HepG2 (cell line): ENCODE measurements at regions of chr4 and their contacts with region 1.

Region 1: GRCh38 chr4:78592104-78592783 is 40.7 kb downstream of the ANXA3 start:
- DNase-seq: no peak
- ATAC-seq: peak; percentile 62; the same call in 2 of the 3 replicates
- H3K4me3 ChIP-seq: no peak overlapping the region
- H3K27ac ChIP-seq: no peak overlapping the region
- H3K4me1 ChIP-seq: no peaks in the 10 kb centered on the region
- H3K27me3 ChIP-seq: no peaks in the 10 kb centered on the region
- CTCF ChIP-seq: peak; percentile 41
- EP300 ChIP-seq: no peak
- POLR2A ChIP-seq: no peak
- RAD21 ChIP-seq: no peak

Region 2: GRCh38 chr4:78542373-78542772 is 49.9 kb before region 1 on chr4:
- CTCF ChIA-PET with region 1: no interaction called
- POLR2A ChIA-PET with region 1: no interaction called
- in situ Hi-C with region 1: no loop called
- intact Hi-C with region 1: loop called (anchors 2 kb)
- DNase-seq: peak; percentile 30
- ATAC-seq: no peak
- H3K4me3 ChIP-seq: no peak overlapping the region
- H3K27ac ChIP-seq: no peak overlapping the region
- H3K4me1 ChIP-seq: no peaks in the 10 kb centered on the region
- H3K27me3 ChIP-seq: no peaks in the 10 kb centered on the region
- CTCF ChIP-seq: no peak
- EP300 ChIP-seq: no peak
- POLR2A ChIP-seq: no peak
- RAD21 ChIP-seq: no peak